ENCODE measurements at regions of chr2 and their contacts with region 1.

Region 1: DNA sequence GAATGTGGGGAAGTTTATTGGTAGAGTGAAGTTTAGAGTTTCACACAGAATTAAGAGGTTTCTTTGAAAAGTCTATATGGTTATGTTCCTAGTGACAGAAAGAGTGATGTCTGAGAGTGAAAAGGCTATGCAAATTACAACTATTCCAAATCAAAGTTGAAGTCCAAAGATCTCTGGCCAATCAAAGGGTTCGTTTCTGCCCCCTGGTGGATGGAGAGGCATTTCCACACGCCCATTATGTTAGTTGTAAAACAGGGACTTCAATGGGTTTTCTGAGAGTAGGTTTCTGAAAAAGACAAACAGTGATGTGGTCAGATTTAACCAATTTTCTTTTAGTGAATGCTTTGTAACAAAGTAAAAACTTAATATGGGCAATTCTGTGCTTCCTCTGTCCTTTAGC is 441.5 kb upstream of the POU3F3 start:
- DNase-seq: no peak
- ATAC-seq: peak; percentile 67
- H3K4me3 ChIP-seq: no peak overlapping the region
- H3K27ac ChIP-seq: no peak overlapping the region
- H3K4me1 ChIP-seq: no peaks in the 10 kb centered on the region
- H3K27me3 ChIP-seq: no peaks in the 10 kb centered on the region
- CTCF ChIP-seq: peak; percentile 47 to 65 (median 61)
- EP300 ChIP-seq: no peak
- POLR2A ChIP-seq: no peak
- RAD21 ChIP-seq: peak; percentile 48

Region 2: GRCh38 chr2:102841107-102841840 is 1571.1 kb before region 1 on chr2:
- CTCF ChIA-PET with region 1: no interaction called
- POLR2A ChIA-PET with region 1: no interaction called
- RAD21 ChIA-PET with region 1: no interaction called
- SMC1A ChIA-PET with region 1: interaction called, 4 read pairs
- in situ Hi-C with region 1: no loop called
- intact Hi-C with region 1: loop called (anchors 5 kb)
- DNase-seq: no peak
- ATAC-seq: peak; percentile 92
- H3K4me3 ChIP-seq: no peak overlapping the region
- H3K27ac ChIP-seq: no peak overlapping the region
- H3K4me1 ChIP-seq: no peaks in the 10 kb centered on the region
- H3K27me3 ChIP-seq: peaks cover 0 to under 1% of the 10 kb centered on the region in 2 experiments; a peak in 2 of 4 replicates
- CTCF ChIP-seq: peak; percentile 50 to 59 (median 53)
- EP300 ChIP-seq: no peak
- POLR2A ChIP-seq: no peak
- RAD21 ChIP-seq: peak; percentile 59

Region 3: GRCh38 chr2:104033399-104033798 is 379.0 kb before region 1 on chr2:
- CTCF ChIA-PET with region 1: interaction called, 3 read pairs
- POLR2A ChIA-PET with region 1: no interaction called
- RAD21 ChIA-PET with region 1: no interaction called
- SMC1A ChIA-PET with region 1: no interaction called
- in situ Hi-C with region 1: no loop called
- intact Hi-C with region 1: loop called (anchors 2 kb)
- DNase-seq: no peak
- ATAC-seq: no peak
- H3K4me3 ChIP-seq: no peak overlapping the region
- H3K27ac ChIP-seq: no peak overlapping the region
- H3K4me1 ChIP-seq: no peaks in the 10 kb centered on the region
- H3K27me3 ChIP-seq: no peaks in the 10 kb centered on the region
- CTCF ChIP-seq: peak; percentile 9 to 37 (median 36); a peak in 3 of 6 replicates
- EP300 ChIP-seq: no peak
- POLR2A ChIP-seq: no peak
- RAD21 ChIP-seq: peak; percentile 50